Activated T-helper 2 cell treated with anti-CD3 and anti-CD28 coated beads, Interferon-gamma antibody, Interleukin-2, Interleukin-4, amounts not matched to agents 10 μg/mL and 5 μg/mL and 100 μg/mL, durations not matched to agents 14 hours and 24 hours and 36 hours (primary cell): ENCODE measurements at regions of chr19 and their contacts with region 1.

Region 1: DNA sequence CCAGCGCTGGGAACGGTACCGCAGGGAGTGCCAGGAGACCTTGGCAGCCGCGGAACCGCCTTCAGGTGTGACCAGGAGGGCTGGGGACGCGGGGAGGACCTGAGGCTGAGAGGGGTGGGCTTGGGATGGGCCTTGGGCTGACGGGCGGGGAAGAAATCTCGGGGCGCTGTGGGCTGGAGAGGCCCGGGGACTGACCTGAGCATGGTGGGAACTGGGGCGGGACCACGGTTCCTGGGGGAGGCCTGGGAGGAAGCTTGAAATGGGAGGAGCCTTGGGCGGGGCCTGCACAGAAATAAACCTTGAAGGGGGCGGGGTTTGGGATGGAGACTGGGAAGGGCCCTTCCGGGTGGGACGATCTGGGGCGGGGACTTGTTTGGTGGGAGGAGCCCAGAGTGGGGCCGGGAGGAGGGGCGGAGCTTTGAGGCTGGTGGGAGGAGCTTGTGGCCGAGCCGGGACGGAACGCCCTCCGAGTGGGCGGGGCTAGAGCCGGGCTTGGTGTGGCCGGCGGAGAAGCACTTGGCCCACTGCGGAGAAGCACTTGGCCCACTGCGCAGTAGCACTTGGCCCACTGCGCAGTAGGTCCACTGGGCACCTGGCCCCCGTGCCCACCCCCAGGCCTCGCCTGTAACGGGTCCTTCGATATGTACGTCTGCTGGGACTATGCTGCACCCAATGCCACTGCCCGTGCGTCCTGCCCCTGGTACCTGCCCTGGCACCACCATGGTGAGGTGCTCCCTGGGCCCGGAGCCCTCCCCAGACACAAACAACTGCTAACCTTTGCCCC is 2.8 kb downstream of the GIPR start:
- DNase-seq: peak; percentile 71
- H3K4me3 Mint-ChIP-seq: peak overlapping the region; percentile 71
- H3K27ac Mint-ChIP-seq: peak overlapping the region; percentile 33
- H3K4me1 Mint-ChIP-seq: peaks cover 23% of the 10 kb centered on the region
- H3K27me3 Mint-ChIP-seq: peaks cover 5% of the 10 kb centered on the region

Region 2: GRCh38 chr19:45632468-45633196 is 38.2 kb before region 1 on chr19:
- intact Hi-C with region 1: no loop called
- DNase-seq: no peak
- H3K4me3 Mint-ChIP-seq: no peak overlapping the region
- H3K27ac Mint-ChIP-seq: peak overlapping the region; percentile 35
- H3K4me1 Mint-ChIP-seq: peaks cover 14% of the 10 kb centered on the region
- H3K27me3 Mint-ChIP-seq: no peaks in the 10 kb centered on the region

Region 3: GRCh38 chr19:45681391-45682015 is 10.6 kb after region 1 on chr19:
- intact Hi-C with region 1: loop called (anchors 1 kb)
- DNase-seq: peak; percentile 86
- H3K4me3 Mint-ChIP-seq: peak overlapping the region; percentile 76
- H3K27ac Mint-ChIP-seq: peak overlapping the region; percentile 72
- H3K4me1 Mint-ChIP-seq: peaks cover 16% of the 10 kb centered on the region
- H3K27me3 Mint-ChIP-seq: peaks cover 2% of the 10 kb centered on the region